ENCODE measurements at regions of chr20 and their contacts with region 1.

Region 1: DNA sequence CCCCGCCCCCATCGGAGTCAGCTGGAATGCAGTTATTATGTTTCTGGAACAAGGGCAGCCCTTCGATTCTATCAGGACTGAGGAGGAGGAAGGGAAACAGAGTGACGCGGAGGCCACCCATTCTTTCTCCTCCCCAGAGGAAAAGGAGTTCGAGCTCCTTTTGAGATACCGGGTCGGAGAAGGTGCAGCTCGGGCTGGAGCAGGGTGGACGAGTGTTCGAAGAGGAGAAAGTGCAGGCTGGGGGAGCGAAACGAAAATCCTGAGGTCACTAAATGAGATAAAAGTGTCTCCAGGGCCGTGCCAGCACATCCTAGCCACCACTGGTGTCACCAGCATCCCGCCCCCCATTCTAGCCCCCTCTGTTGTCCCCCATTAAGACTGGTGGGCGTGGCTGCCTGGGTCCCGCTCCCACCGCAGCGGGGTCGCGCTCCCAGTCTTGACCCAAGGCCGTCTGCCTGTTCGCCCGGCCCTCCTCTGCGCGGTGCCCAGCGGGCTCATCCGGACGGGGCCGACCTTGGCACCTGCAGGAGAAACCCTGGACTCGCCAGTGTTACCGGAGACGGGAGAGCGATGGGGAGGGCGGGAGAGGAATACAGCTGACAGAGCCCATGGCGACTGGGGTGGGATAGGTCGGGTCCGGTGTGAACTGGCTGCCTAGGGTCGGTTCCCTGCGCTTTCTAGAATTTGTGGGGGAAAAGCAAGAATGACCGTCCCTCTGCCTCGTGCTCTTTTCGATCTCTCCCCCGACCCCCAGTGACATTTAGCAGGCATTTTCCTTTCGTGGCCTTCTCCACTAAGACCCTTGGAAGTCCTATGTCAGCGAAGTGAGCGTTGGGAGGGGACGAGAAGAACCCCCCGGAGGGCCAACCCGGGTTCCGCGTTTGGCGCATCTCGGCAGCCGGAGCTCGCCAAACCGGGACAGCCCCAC is 16.2 kb downstream of the FOXA2 start:
- DNase-seq: no peak
- ATAC-seq: no peak
- H3K4me3 ChIP-seq: no peak overlapping the region
- H3K27ac ChIP-seq: no peak overlapping the region
- H3K4me1 ChIP-seq: peaks cover 0 to 15% (median 0%) of the 10 kb centered on the region in 12 donors
- H3K27me3 ChIP-seq: peaks cover 27 to 98% (median 89%) of the 10 kb centered on the region in 9 donors
- CTCF ChIP-seq: no peak
- POLR2A ChIP-seq: no peak

Region 2: DNA sequence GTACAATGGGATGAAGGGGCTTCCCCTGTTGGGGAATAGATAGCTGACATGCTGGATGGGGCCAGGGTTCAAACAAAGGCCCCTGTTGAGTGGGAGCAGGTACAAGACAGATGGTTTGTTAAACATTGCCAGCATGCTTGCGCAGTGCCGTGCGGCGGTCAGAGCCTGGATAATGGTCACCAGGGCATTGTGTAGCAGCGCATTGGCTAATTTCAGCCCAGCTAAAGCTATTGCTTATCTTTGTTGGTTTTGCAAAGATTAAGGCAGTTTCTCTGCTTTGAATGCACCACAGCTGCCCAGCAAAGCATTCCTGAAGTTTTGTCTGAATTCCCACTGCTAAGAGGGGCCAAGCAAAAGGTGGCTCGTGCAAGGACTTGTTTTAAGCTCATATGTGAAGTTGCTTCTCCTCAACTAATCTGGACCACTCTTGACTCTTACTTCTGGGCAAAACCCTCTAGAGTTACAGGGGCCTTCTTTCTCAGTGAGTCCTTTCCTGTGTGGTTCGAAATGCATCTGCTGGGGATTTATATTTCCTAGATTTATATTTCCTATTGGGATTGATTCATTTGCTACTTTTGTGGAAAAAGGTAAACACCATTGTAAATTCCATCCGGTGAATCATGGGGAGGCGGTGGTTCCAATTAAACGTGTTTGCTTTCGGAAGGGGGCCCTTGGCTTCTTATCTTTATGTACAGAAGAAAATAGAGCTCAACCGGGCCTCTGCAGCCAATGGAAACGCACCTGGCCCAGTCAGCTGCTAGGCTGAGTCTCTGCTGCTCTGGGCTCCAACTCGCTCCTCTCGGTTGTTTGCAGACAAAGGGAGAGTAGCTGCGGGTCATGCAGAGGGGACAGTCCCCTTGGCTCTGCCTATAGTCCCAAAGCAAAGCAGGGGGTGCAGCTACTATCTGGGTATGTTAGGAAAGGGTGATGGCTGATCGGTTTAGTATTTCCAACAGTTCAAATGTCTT is 56.0 kb before region 1 on chr20:
- intact Hi-C with region 1: loop called in 1 of 10 experiments (anchors 10 kb)
- DNase-seq: no peak
- ATAC-seq: no peak
- H3K4me3 ChIP-seq: no peak overlapping the region
- H3K27ac ChIP-seq: no peak overlapping the region
- H3K4me1 ChIP-seq: no peaks in the 10 kb centered on the region
- H3K27me3 ChIP-seq: peaks cover 0 to 32% (median 0%) of the 10 kb centered on the region in 9 donors
- CTCF ChIP-seq: no peak
- POLR2A ChIP-seq: no peak

Region 3: DNA sequence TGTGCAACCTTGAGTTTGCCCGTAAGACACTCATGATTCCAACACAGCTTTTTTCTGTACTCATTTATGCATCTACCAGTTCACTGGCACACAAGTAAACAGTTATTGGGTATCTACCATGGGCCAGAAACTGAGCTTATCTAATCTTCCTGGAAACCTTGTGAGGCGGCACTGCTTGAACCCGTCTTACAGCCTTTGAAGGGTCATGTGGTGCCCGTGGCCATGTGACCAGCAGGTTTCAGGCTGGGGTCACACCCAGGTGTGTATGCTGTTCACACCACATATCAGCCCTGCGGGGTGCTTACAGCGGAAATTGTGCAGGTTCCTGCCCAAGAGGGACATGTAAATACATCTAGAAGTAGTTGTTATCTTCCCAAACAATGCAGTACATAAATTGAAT is 475.2 kb after region 1 on chr20:
- intact Hi-C with region 1: no loop called
- DNase-seq: no peak
- ATAC-seq: no peak
- H3K4me3 ChIP-seq: no peak overlapping the region
- H3K27ac ChIP-seq: no peak overlapping the region
- H3K4me1 ChIP-seq: peaks cover 0 to 34% (median 16%) of the 10 kb centered on the region in 12 donors
- H3K27me3 ChIP-seq: peaks cover 0 to 49% (median 14%) of the 10 kb centered on the region in 9 donors
- CTCF ChIP-seq: no peak
- POLR2A ChIP-seq: no peak

Measured in heart left ventricle (tissue), 16 donors.